AG04449 (cell line): ENCODE measurements at regions of chr13 and their contacts with region 1.

Region 1: DNA sequence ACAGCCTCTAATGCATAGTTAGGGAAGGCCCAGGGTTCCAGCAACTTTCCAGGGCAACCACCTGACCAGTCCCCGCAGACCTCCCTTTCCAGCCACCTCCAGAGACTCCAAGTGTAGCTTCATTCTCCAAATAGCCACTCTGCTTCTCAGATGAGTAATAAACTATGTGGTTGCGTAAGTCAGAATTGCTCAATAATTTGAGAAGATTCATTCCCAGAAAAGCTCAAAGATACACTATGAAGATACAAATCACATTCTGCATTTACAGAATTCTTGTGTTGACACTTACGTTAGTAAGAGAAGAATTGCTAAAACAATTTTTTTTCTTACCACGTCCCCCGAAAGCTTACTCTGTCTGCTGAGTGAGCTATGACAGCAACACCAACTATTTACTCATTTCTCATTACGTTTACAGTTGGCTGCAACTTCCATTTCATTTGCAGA is 8.2 kb upstream of the LATS2 start:
- DNase-seq: peak; percentile 97
- H3K4me3 ChIP-seq: no peak overlapping the region
- CTCF ChIP-seq: no peak

Region 2: DNA sequence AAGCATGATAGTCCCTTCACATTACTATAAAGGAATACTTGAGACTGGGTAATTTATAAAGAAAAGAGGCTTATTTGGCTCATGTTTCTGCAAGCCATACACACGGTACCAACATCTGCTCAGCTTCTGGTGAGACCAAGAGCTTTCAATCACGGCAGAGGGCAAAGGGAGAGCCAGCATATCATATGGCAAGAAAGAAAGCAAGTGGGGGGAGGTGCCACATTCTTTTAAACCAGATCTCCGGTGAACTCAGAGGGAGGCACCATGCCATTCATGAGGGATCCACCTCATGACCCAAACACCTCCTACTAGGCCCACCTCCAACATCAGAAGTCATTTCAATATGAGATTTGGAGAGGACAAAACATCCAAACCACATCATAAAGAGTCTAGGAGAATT is 187.4 kb before region 1 on chr13:
- CTCF ChIA-PET with region 1: no interaction called
- POLR2A ChIA-PET with region 1: no interaction called
- DNase-seq: no peak
- H3K4me3 ChIP-seq: no peak overlapping the region
- CTCF ChIP-seq: no peak

Region 3: DNA sequence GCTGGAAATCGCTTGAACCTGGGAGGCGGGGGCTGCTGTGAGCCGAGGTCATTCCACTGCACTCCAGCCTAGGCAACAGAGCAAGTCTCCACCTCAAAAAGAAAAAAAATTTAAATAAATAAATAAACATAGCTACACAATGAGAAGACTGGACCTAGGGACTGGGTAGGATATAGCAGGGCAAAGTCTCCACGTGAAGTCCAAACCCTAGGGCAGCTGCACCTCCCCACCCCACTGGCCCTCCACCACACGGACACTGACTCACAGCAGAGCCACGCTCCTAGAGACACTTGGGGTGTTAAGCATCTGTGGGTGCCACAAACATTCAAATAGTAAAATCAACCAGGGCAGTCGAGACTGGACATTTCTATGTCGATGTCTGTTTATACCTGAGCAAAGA is 15.3 kb before region 1 on chr13:
- CTCF ChIA-PET with region 1: interaction called, 10 read pairs
- POLR2A ChIA-PET with region 1: interaction called, 10 read pairs
- DNase-seq: no peak
- H3K4me3 ChIP-seq: no peak overlapping the region
- CTCF ChIP-seq: no peak

Region 4: DNA sequence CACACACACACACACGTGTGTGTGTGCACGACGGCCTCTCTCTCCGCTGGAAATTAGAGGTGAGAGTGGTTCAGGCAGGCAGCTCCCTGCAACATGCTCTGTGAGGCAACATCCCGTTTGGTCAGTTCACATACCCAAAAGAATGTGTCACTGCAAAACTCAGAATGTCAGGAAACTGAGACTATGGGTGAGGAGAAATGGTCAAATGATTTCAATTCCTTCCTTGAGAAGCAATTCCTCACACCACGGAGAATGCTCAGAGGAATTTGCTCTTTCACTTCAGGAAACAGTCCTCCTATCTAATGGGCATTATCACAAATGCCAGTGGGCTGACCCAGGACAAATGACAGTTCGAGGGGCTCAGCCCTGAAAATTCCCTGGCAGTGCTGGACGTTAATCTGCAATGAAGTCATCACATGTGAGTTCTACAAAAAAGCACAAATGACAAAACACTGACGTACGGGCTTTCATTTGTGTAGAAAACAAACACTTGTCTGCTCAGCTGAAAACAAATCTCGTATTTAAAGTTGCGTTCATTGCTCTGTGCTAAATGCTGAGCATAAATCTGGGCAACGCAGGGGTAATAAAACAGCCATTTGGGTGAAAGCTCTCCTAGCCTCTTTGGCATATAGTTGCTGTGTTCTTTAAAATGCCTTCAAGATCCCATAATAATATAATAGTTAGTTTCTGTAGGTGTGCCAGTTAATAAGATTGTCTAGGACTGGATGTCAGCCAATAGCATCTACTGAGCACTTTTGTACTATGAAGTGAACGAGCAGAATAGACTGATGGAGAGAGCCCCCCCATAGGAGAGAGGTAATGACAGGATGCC is 10.4 kb after region 1 on chr13:
- CTCF ChIA-PET with region 1: interaction called, 4 read pairs
- POLR2A ChIA-PET with region 1: interaction called, 23 read pairs
- DNase-seq: peak; percentile 95
- H3K4me3 ChIP-seq: peak overlapping the region; percentile 39
- CTCF ChIP-seq: no peak

Region 5: DNA sequence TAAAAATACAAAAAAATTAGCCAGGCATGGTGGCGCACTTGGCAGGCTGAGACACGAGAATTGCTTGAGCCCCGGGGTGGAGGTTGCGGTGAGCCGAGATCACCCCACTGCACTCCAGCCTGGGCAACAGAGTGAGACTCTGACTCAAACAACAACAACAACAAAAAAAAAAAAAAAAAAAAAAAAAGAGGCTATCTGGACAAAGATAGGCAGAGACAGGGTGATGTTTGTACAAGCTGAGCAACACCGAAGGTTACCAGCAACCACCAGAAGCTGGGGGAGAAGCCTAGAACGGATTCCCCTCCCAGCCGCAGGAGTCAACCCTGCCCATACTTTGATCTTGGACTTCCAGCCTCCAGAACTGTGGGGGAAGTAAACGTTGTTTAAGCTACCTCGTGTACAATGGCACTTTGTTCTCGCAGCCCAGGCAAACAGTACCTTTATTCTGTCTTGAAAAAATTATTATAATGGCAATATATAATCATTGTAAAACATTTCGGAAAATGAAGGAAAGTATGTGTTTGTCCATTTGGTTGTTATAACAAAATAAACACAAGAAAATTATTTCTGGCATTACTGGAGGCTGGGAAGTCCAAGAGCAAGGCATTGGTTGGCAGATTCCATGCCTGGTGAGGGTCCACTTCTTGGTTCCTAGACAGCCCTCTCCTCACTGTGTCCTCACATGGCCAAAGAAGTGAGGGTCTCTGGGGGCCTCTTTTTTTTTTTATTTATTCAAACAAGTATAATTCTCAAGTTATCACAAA is 31.6 kb after region 1 on chr13:
- CTCF ChIA-PET with region 1: no interaction called
- POLR2A ChIA-PET with region 1: no interaction called
- DNase-seq: no peak
- H3K4me3 ChIP-seq: no peak overlapping the region
- CTCF ChIP-seq: no peak

Region 6: DNA sequence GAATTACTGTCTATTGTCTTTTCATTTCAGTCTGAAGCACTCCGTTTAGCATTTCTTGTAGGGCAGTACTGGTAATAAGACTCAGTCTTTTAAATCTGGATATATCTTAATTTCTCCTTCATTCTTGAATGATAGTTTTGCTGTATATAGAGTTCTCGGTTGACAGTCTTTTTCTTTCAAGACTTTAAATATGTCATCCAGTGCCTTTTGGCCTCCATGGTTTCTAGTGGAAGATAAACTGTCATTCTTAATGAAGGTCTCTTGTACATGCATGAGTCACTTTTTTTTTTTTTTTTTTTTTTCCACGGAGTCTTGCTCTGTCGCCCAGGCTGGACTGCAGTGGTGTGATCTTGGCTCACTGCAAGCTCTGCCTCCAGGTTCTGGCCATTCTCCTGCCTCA is 416.7 kb after region 1 on chr13:
- CTCF ChIA-PET with region 1: no interaction called
- POLR2A ChIA-PET with region 1: no interaction called
- DNase-seq: no peak
- H3K4me3 ChIP-seq: no peak overlapping the region
- CTCF ChIP-seq: no peak